Activated CD4-positive, alpha-beta T cell treated with anti-CD3 and anti-CD28 coated beads for 36 hours (primary cell): ENCODE measurements at regions of chr6 and their contacts with region 1.

Region 1: DNA sequence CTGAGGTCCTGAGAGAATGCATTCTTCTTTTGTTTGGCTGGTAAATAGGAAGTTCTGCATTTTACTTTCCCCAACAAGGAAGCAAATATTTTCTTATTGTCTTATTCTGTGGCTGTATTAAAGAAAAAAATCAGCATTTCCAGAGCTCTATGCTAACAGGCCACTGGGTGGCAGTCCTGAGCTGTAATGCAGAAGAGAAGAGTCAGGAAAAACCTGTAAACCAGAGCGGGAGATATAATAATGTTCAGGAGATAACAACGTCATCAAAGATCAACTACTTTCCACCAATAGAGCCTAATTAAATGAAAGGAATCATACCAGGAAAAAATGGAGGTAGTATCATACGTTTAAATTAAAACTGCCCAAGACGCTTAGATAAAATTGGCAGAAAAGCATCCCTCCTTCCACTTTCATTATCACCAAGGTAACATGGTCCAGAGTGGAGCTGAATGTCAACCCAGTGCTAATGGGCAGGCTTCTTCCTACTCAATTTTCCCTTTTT is 55.6 kb upstream of the CARMIL1 start:
- DNase-seq: peak; percentile 80
- ATAC-seq: peak; percentile 66
- H3K4me3 Mint-ChIP-seq: peak overlapping the region; percentile 58
- H3K27ac Mint-ChIP-seq: no peak overlapping the region
- H3K4me1 Mint-ChIP-seq: peaks cover 9% of the 10 kb centered on the region
- H3K27me3 Mint-ChIP-seq: peaks cover 10% of the 10 kb centered on the region

Region 2: GRCh38 chr6:25250878-25251277 is 27.3 kb after region 1 on chr6:
- CTCF ChIA-PET with region 1: interaction called, 16 read pairs
- POLR2A ChIA-PET with region 1: no interaction called
- intact Hi-C with region 1: no loop called
- DNase-seq: peak; percentile 64
- ATAC-seq: peak; percentile 98
- H3K4me3 Mint-ChIP-seq: no peak overlapping the region
- H3K27ac Mint-ChIP-seq: no peak overlapping the region
- H3K4me1 Mint-ChIP-seq: peaks cover 22% of the 10 kb centered on the region
- H3K27me3 Mint-ChIP-seq: peaks cover 11% of the 10 kb centered on the region

Region 3: DNA sequence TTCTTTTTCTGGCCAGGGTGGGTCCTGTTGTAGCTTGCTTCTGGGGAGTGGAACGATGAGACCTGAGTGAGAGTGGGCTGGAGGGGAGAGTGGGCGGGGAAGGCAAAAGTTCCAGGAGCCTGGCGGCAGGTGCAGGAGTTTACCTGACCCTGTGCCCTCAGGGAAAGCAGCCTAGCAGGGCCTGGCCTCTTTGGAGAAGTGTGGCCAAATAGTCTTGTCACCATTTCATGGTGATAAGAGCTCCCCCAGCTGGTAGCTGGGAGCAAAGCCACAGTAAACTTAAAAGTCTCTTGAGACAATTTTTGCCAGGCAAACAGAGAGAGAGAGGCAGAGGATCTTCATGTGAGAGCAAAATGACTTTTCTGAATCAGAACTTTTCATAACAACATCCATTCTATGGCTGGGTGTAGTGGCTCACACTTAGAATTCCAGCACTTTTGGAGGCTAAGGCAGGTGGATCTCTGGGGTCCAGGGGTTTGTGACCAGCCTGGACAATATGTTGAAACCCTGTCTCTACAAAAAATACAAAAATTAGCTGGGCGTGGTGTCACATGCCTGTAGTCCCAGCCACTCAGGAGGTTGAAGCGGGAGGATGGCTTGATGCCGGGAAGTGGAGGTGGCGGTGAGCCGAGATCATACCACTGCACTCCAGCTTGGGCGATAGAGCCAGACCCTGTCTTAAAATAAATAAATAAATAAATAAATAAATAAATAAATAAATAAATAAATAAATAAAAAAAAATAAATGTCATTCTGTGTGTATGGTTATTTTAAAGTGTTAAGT is 266.7 kb after region 1 on chr6:
- CTCF ChIA-PET with region 1: interaction called, 40 read pairs
- POLR2A ChIA-PET with region 1: no interaction called
- intact Hi-C with region 1: loop called (anchors 1 kb)
- DNase-seq: peak; percentile 81
- ATAC-seq: peak; percentile 86
- H3K4me3 Mint-ChIP-seq: no peak overlapping the region
- H3K27ac Mint-ChIP-seq: no peak overlapping the region
- H3K4me1 Mint-ChIP-seq: peaks cover 4% of the 10 kb centered on the region
- H3K27me3 Mint-ChIP-seq: no peaks in the 10 kb centered on the region

Region 4: DNA sequence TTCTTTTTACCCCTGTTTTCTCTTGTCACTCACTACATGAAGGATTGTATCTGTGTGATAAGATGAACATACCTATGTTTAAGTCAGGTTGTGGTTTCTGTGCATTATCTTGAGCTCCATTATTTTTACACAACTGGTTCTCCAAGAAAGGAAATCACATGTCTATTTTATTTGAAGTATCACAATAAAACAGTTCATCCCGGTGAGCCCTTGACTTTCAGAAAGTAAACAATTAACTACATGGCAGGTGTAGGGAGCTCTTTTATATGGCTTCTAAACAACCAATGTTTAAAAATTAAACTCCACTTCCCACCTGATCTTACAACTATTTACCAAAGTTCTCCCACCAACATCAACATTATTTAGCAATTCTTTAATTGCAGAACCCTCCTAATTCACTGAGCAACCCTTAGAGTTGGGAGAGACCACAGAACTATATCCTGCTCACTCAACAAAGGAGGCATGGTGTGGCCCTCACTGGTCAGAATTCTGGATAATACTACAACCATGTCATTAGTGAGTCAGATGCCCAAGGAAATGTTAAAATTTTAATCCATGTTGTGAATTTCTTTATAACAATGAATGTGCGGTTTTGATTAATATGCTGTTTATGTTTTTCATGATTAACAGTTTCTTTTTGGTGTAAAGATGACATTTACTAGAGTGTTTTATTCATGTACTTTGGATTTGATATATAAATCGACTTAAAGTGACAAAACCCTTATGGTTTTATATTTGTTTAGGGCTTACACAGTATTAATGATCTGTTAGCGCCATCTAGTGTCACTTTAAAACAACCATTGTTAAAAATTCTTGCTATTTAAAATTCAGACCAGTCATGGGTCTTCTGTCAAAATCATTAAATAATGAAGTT is 378.5 kb after region 1 on chr6:
- CTCF ChIA-PET with region 1: interaction called, 14 read pairs
- POLR2A ChIA-PET with region 1: interaction called, 3 read pairs
- intact Hi-C with region 1: loop called (anchors 1 kb)
- DNase-seq: no peak
- ATAC-seq: no peak
- H3K4me3 Mint-ChIP-seq: no peak overlapping the region
- H3K27ac Mint-ChIP-seq: no peak overlapping the region
- H3K4me1 Mint-ChIP-seq: no peaks in the 10 kb centered on the region
- H3K27me3 Mint-ChIP-seq: no peaks in the 10 kb centered on the region

Region 5: GRCh38 chr6:26249957-26250697 is 1026.6 kb after region 1 on chr6:
- CTCF ChIA-PET with region 1: no interaction called
- POLR2A ChIA-PET with region 1: no interaction called
- intact Hi-C with region 1: no loop called
- DNase-seq: peak; percentile 85
- ATAC-seq: peak; percentile 63
- H3K4me3 Mint-ChIP-seq: peak overlapping the region; percentile 86
- H3K27ac Mint-ChIP-seq: peak overlapping the region; percentile 97
- H3K4me1 Mint-ChIP-seq: peaks cover 14% of the 10 kb centered on the region
- H3K27me3 Mint-ChIP-seq: no peaks in the 10 kb centered on the region